ENCODE measurements at regions of chr15 and their contacts with region 1.

Region 1: DNA sequence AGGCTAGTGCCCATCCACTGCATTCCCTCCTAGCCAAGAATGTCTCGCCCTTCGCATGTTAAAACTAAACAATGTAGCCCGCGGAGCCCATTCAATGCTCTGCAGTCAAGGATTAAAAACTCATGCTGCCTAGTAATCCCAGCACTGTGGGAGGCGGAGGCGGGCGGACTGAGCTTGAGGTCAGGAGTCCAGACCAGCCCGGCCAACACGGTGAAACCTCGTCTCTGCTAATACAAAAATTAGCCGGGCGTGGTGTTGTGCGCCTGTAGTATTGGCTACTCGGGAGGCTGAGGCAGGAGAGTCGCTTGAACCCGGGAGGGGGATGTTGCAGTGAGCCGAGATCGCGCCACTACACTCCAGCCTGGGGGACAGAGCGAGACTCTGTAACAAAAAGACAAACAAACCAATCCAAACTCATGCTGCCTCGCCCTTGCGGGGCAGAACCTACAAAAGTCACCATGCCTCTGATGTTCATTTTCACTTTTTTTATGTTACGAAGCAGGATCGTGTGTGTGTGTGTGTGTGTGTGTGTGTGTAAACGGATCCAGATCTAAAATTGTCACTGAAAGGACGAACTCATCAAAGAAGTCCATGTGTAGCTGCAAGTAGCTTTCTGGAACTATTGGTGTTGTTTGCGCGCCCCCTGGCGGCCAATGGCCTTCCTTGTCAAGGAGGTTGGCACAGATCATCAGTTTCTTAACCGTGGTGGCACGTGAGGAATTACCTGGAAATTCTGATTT is 54.8 kb upstream of the SPESP1 start:
- DNase-seq: peak; percentile 95

Region 2: DNA sequence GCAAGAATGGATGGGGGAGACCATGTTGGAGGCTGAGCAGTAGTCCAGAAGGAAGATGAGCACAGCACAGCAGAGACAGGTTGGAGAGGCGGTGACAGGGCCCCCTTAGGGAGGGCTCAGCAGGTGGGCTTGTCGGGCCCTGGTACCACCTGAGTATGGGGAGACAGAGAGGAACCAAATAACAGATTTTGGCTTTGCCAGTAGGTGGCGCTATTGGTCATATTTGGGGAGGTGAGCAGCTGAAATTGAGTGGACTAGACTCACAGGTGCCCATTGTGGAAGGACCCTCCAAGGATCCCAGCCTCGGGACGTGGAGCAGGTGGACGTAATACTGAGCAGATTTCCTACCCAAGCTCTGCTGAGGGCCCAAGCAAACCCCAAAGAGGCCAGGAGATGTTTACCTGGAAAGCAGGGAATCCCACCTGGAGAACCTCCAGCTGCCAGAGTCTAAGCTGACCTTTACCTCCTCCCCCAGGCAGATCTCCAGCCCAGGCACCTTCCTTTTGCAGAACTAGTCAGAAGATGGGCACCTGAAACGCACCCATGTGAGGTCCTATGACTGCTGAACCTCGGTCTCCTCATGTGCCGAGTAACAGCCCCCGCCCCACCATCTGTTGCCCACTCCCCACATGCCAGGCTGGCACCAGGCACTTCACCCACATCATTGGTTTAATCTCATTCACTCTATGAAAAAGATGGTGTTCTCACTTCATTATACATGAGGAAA is 321.4 kb before region 1 on chr15:
- intact Hi-C with region 1: loop called (anchors 2 kb)
- DNase-seq: peak; percentile 79

Region 3: GRCh38 chr15:68672781-68673205 is 202.8 kb before region 1 on chr15:
- intact Hi-C with region 1: loop called (anchors 5 kb)
- DNase-seq: peak; percentile 54

Region 4: DNA sequence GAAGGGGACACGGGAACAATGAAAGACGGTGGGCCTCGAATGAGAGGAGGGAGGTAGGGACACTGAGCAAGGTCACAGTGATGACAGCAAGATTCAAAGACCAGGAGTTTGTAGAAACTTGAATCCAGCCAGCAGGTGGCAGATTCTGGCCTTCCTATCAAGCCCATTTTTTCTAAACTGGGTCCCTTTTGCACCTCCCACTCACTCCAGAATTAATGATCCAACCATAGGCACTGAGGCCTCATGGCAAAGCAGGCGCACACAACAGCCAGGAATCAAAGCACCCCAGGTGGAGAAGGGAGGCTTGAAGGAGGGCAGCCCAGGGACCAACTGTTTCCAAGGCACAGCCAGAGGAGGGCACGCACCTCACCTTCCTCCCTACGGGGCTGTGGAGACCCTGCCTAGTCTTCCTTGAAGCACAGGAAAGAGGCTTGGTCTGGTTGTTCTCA is 145.1 kb before region 1 on chr15:
- intact Hi-C with region 1: loop called (anchors 1 kb)
- DNase-seq: peak; percentile 70

Region 5: DNA sequence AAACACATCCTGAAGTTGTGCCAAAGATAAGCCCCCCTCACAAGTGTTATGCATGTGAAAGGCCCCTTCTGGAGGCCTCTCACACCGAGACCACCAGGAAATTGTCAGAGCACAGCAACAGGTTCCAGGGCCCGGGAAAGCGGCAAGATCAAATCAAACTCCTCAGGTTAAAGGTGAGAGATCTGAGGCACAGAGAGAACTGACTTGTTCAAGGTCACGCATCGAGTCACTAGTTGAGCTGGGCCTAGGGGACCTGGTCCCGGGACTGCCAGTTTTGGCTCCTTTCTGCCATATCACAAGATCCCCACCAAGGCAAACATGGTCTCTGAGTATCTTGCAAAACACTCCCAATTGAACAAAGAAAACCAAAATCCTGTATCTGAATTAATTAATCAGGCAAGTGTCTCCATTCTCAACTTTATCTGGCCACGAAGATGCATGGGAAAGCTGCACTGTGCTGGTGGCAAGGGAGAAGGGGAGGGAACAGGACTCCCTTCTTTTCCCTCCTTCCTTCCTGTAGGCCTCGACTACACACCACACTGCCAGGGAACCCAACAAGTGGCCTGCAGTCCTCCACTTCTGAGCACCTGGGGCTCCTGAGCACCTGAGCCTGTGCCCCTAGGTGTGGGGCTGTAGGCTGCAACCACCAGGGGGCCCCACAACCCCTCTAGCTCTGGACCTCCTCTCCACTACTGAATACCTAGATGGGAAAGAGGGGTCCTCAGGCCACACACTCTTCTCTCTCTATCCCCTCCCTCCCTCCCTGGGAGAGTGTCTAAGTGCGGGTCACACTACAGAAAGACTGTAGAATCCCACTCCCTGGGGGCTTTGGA is 92.1 kb before region 1 on chr15:
- intact Hi-C with region 1: loop called (anchors 2 kb)
- DNase-seq: peak; percentile 83

Region 6: DNA sequence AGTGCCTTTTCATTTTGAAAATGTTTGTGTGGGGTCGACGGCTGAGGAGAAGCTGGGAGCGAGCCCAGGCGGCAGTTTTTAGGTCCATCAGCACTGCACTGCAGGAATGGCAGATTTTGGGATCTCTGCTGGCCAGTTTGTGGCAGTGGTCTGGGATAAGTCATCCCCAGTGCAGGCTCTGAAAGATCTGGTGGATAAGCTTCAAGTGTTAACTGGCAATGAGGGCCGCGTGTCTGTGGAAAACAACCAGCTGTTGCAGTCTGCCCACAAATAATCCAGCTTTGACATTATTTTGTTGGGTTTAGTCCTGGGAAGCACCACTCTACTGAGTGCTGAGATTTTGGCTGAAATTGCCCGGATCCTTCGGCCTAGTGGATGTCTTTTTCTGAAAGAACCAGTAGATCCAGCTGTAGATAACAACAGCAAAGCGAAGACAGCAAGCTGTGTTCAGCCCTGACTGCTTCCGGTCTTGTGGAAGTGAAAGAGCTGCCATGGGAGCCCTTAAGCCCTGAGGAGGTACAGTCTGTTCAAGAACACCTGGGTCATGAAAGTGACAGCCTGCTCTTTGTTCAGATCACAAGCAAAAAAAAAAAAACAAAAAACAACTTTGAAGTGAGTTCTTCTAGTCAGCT is 41.7 kb before region 1 on chr15:
- intact Hi-C with region 1: loop called (anchors 5 kb)
- DNase-seq: no peak

Measured in cardiac septum (tissue), 1 donor.